Activated naive CD4-positive, alpha-beta T cell treated with anti-CD3 and anti-CD28 coated beads for 36 hours (primary cell): ENCODE measurements at regions of chr4 and their contacts with region 1.

Region 1: DNA sequence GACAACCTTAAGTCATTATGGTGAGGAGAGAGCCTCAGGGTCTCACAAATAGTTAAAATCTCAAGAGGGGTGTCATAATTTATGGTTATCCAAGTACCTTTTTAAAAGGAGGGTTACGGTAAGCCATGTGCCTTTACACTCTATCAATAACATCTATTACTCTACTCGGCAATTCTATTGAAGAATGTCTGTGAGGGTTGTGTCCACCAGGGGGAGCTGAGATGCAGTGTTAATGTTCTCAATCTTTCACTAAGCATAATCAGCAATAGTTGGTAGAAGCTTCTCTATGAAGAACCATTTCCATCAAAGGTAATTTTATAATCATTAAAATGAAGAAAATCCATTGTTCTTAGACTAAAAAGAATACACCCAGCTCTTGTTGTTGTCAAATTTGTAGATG is 457.4 kb downstream of the CENPC start:
- DNase-seq: peak; percentile 72
- H3K4me3 Mint-ChIP-seq: no peak overlapping the region
- H3K27ac Mint-ChIP-seq: no peak overlapping the region
- H3K4me1 Mint-ChIP-seq: no peaks in the 10 kb centered on the region
- H3K27me3 Mint-ChIP-seq: no peaks in the 10 kb centered on the region

Region 2: DNA sequence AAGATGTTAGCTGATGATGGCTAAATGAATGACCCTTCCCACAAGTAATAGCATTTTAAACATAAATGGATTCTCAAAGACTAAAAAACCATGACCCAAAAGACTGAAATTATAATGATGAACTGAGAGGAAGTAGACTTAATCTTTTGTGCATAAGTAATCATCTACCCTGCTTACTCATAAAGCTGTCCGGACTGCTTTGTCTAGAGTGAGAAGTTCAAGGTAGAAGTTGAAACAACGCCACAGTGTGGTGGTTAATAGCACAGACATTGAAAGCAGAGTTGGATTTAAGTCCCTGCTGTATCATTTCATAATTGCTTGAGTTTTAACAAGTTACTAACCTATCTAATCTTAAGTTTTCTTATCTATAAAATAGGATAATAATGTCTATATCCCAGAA is 110.8 kb after region 1 on chr4:
- CTCF ChIA-PET with region 1: no interaction called
- intact Hi-C with region 1: no loop called
- DNase-seq: no peak
- H3K4me3 Mint-ChIP-seq: no peak overlapping the region
- H3K27ac Mint-ChIP-seq: no peak overlapping the region
- H3K4me1 Mint-ChIP-seq: no peaks in the 10 kb centered on the region
- H3K27me3 Mint-ChIP-seq: peaks cover 3% of the 10 kb centered on the region

Region 3: DNA sequence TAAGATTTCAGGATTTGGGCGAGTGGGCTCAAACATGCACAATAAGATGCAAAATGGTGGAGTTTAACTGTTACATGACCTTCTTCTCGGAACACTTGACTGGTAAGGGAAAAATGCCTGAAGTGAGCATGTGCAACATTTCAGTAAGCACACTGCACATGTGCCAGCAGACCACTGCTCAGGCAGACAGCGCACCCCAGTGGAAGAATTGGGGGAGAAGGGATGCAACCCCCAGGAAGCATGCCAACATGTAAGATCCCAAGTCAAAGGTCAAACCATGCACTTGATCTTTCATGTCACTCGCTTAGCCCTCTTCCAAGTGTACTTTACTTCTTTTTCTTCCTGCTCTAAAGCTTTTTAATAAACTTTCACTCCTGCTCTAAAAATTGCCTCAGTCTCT is 201.1 kb after region 1 on chr4:
- CTCF ChIA-PET with region 1: interaction called, 5 read pairs
- intact Hi-C with region 1: loop called (anchors 1 kb)
- DNase-seq: peak; percentile 56
- H3K4me3 Mint-ChIP-seq: no peak overlapping the region
- H3K27ac Mint-ChIP-seq: no peak overlapping the region
- H3K4me1 Mint-ChIP-seq: no peaks in the 10 kb centered on the region
- H3K27me3 Mint-ChIP-seq: peaks cover 5% of the 10 kb centered on the region

Region 4: DNA sequence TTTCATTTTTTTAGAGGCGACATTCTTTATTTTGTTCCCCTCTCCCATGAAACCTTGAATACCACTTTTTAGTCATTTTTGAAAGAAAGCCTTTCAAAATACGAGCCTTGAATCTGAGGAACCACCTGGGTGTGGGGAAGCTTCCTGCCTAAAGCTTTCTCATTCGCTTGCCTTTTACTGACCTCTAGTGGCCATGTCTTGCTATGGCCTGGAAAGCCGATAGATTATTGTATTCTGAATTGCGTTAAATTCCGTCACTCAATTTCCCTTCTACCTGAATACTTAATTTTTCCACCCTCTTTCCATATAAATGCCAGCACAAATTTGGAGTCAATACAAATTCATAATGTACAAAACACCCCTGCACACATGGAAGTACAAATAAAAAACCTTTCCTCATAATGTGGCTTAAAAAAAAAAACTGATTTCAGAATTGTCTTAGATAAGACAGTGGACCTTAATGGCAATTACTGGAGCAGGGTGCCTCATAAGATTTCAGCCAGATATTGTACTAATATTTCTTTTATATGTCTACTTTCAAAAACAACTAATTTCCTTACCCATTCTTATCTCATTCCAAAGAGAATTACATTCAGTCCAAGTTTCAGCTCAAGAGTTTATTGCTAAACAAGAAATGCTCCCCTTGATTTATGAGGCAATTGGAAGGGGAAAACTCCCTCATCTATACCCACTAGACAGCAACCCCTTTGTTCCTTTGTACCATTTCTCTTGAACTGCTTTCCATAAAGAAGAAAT is 239.5 kb after region 1 on chr4:
- CTCF ChIA-PET with region 1: interaction called, 17 read pairs
- intact Hi-C with region 1: loop called (anchors 1 kb)
- DNase-seq: peak; percentile 67
- H3K4me3 Mint-ChIP-seq: no peak overlapping the region
- H3K27ac Mint-ChIP-seq: no peak overlapping the region
- H3K4me1 Mint-ChIP-seq: no peaks in the 10 kb centered on the region
- H3K27me3 Mint-ChIP-seq: peaks cover 17% of the 10 kb centered on the region

Region 5: DNA sequence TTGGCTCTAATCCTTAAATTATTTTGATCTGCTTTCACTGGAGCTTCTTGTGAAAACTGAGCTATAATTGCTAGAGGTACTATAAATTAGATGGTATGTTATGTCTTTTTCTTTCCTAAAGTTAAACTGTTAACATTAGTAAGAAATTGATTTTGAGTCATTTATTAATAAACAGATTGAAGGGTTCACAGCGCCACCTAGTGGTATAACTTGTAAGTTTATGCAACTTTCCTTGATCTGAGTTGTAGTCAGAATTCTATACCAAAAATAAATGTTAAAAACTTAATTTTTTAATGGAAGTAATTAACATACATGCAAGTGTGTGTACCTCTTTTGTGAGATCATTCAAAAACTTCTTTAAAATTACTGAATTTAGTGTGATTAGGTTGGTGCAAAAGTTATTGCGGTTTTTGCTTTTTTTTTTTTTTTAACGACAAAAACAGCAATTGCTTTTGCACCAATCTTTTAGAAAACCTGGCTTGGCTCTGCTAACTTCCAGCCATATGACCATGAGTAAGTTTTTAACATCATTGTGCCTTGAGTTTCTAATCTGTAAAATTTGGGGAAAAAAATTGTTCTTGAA is 305.9 kb after region 1 on chr4:
- CTCF ChIA-PET with region 1: interaction called, 3 read pairs
- intact Hi-C with region 1: loop called (anchors 1 kb)
- DNase-seq: peak; percentile 21
- H3K4me3 Mint-ChIP-seq: no peak overlapping the region
- H3K27ac Mint-ChIP-seq: no peak overlapping the region
- H3K4me1 Mint-ChIP-seq: no peaks in the 10 kb centered on the region
- H3K27me3 Mint-ChIP-seq: peaks cover 5% of the 10 kb centered on the region